Prostate gland (tissue), 2 donors: ENCODE measurements at regions of chr6 and their contacts with region 1.

Region 1: GRCh38 chr6:624979-625378 is 31.9 kb downstream of the HUS1B start:
- DNase-seq: no peak
- H3K4me3 ChIP-seq: no peak overlapping the region
- H3K27ac ChIP-seq: no peak overlapping the region
- H3K4me1 ChIP-seq: no peaks in the 10 kb centered on the region
- H3K27me3 ChIP-seq: no peaks in the 10 kb centered on the region
- CTCF ChIP-seq: peak in 1 of 4 experiments; percentile 9
- POLR2A ChIP-seq: no peak

Region 2: GRCh38 chr6:684831-685636 is 60.1 kb after region 1 on chr6:
- intact Hi-C with region 1: loop called (anchors 5 kb)
- DNase-seq: no peak
- H3K4me3 ChIP-seq: no peak overlapping the region
- H3K27ac ChIP-seq: no peak overlapping the region
- H3K4me1 ChIP-seq: no peaks in the 10 kb centered on the region
- H3K27me3 ChIP-seq: no peaks in the 10 kb centered on the region
- CTCF ChIP-seq: no peak
- POLR2A ChIP-seq: no peak

Region 3: GRCh38 chr6:1972962-1973361 is 1348.0 kb after region 1 on chr6:
- intact Hi-C with region 1: no loop called
- DNase-seq: no peak
- H3K4me3 ChIP-seq: no peak overlapping the region
- H3K27ac ChIP-seq: no peak overlapping the region
- H3K4me1 ChIP-seq: no peaks in the 10 kb centered on the region
- H3K27me3 ChIP-seq: no peaks in the 10 kb centered on the region
- CTCF ChIP-seq: no peak
- POLR2A ChIP-seq: no peak